Mammary epithelial cell (primary cell): ENCODE measurements at regions of chr10 and their contacts with region 1.

Region 1: DNA sequence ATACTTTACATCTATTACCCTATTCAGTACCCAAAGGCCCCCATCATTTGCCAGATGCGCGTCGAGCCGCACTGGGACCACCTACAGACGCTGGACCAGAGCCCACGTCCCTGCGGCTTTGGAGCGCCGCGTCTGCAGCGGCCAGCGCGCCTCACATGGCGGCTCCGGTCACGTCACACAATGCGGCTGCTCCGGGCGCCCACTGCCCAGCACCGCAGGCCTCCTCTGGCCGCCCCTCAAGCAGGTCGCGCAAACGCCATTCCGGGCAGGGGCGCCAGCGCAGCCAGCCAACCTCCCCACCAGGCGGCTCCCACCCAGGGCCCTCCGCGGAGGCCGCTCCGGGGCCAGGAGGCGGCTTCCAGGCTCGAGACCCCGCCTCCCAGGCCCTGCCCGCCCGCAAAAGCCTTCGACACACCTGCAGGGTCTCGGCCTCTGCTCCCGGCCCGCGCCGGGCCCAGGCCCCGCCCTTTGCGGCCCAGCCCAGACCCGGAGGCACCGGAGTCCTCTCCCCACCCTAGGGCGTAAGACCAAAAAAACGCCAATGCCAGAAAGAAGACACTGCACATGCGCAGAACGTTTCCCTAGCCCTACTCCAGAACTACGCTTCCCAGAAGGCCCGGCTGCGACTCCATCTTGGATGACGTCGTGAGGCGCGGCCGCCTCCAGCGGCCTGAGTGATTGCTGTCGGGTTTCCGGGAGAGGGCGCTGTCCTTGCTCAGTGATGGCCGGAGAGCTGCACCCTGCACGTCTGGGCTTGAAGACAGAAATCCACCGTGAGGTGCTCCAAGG is at the start of gene ZNF25:
- DNase-seq: peak; percentile 98
- H3K4me3 ChIP-seq: peak within 1 kb of the TSS; percentile 71 to 87 (median 78)
- H3K27ac ChIP-seq: peak within 1 kb of the TSS; percentile 73
- H3K4me1 ChIP-seq: peaks cover 10% of the 10 kb centered on the region
- H3K27me3 ChIP-seq: no peaks in the 10 kb centered on the region
- CTCF ChIP-seq: peak; percentile 82 to 95
- total RNA-seq, gene ZNF25: 5.7 to 5.9 TPM

Region 2: GRCh38 chr10:37857287-37858211 is 118.7 kb before region 1 on chr10 and contains the start of gene ZNF248:
- CTCF ChIA-PET with region 1: no interaction called
- dilution Hi-C with region 1: no loop called
- in situ Hi-C with region 1: no loop called
- intact Hi-C with region 1: loop called (anchors 5 kb)
- DNase-seq: peak; percentile 93
- H3K4me3 ChIP-seq: peak within 1 kb of the TSS; percentile 67 to 87 (median 72)
- H3K27ac ChIP-seq: peak within 1 kb of the TSS; percentile 66
- H3K4me1 ChIP-seq: peaks cover 11% of the 10 kb centered on the region
- H3K27me3 ChIP-seq: no peaks in the 10 kb centered on the region
- CTCF ChIP-seq: no peak
- total RNA-seq, gene ZNF248: 5.9 to 8.2 TPM

Region 3: GRCh38 chr10:38010119-38010903 is 34.0 kb after region 1 on chr10 and contains the start of gene ZNF33A:
- CTCF ChIA-PET with region 1: no interaction called
- dilution Hi-C with region 1: no loop called
- in situ Hi-C with region 1: no loop called
- intact Hi-C with region 1: loop called (anchors 1 kb)
- DNase-seq: peak; percentile 95
- H3K4me3 ChIP-seq: peak within 1 kb of the TSS; percentile 56 to 83 (median 66)
- H3K27ac ChIP-seq: peak within 1 kb of the TSS; percentile 79
- H3K4me1 ChIP-seq: peaks cover 8% of the 10 kb centered on the region
- H3K27me3 ChIP-seq: no peaks in the 10 kb centered on the region
- CTCF ChIP-seq: no peak
- total RNA-seq, gene ZNF33A: 18.7 to 21.2 TPM

Region 4: DNA sequence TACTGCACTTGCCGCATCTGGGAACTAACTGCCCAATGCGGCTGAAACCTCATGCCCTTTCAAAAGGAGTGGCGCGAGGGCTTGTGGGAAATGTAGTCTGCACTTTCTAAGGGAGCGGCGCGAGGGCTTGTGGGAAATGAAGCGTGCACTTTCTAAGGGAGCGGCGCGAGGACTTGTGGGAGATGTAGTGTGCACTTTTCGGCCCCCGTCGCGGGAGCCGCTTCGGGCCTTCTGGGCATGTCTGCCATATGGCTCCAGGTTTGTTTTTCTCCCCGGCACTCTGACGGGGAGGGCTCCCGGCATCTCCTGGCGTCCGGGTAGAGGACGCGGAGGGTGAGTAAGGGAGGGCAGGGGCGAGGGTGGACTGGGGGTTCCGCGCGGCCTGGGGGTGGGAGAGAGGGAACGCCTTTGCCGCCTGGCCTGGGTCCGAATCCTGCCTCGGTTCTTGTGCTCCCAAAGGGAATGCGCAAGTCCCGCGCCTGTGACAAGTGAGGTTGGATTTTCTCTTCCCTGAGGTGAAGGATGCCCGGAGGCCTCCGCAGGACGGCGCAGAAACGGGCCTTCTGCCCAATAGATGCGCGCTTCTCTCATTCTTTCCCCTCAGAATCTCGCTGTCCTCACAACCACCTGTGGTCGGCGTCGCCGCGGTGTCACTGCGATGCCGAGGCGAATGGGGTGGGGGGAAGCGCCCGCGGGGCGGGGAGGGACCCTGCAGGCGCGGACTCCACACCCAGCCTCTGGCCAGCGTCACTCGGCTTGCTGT is 118.1 kb after region 1 on chr10 and contains the start of gene ZNF37A:
- CTCF ChIA-PET with region 1: no interaction called
- dilution Hi-C with region 1: no loop called
- in situ Hi-C with region 1: no loop called
- intact Hi-C with region 1: loop called (anchors 1 kb)
- DNase-seq: peak; percentile 96
- H3K4me3 ChIP-seq: peak within 1 kb of the TSS; percentile 63 to 82 (median 80)
- H3K27ac ChIP-seq: peak within 1 kb of the TSS; percentile 47
- H3K4me1 ChIP-seq: peaks cover 6% of the 10 kb centered on the region
- H3K27me3 ChIP-seq: no peaks in the 10 kb centered on the region
- CTCF ChIP-seq: no peak
- total RNA-seq, gene ZNF37A: 14.0 to 24.4 TPM